ENCODE measurements at regions of chrX and their contacts with region 1.

Region 1: DNA sequence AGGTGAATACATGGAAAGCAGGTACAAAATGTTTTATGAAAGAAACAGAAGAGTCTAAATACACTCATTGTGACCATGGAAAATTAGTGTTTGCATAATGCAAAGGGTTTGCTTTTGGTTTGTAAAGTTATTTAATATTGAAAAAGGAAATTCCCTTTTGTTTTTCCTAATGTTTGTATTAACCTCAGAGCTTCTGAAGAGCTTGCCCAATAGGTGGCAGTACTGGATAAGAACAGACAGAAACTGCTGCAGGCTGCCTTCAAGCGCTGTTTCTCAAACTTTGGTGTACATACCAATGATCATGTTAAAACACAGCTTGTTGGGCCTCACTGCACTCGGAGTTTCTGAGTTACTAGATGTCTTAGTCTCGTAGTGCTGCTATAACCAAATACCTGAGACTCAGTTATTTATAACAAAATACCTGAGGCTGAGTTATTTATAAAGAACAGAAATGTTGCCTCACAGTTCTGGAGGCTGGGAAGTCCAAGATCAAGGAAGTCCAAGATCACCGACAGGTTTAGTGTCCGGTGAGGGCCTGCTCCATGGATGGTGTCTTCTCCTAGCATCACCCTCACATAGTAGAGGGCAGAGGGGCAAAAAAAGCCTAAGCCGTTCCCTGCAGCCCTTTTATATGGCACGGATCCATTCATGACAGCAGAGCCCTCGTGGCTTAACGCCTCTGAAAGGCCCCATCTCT is 54.2 kb downstream of the SUPT20HL2 start:
- DNase-seq: no peak
- H3K4me3 ChIP-seq: no peak overlapping the region
- H3K27ac ChIP-seq: no peak overlapping the region
- H3K4me1 ChIP-seq: no peaks in the 10 kb centered on the region
- H3K27me3 ChIP-seq: no peaks in the 10 kb centered on the region
- CTCF ChIP-seq: peak in 2 of 3 experiments; percentile 55 to 58; a peak in 3 of 4 replicates
- EP300 ChIP-seq: no peak
- POLR2A ChIP-seq: no peak
- RAD21 ChIP-seq: peak; percentile 77 to 80

Region 2: GRCh38 chrX:24241822-24242648 is 17.7 kb before region 1 on chrX:
- CTCF ChIA-PET with region 1: interaction called, 10 read pairs
- POLR2A ChIA-PET with region 1: no interaction called
- DNase-seq: no peak
- H3K4me3 ChIP-seq: no peak overlapping the region
- H3K27ac ChIP-seq: no peak overlapping the region
- H3K4me1 ChIP-seq: 0 out of 7 replicates have a peak, but pooled peaks cover 0 to 3% (median 0%) of the 10 kb centered on the region in 4 experiments
- H3K27me3 ChIP-seq: no peaks in the 10 kb centered on the region
- CTCF ChIP-seq: peak in 2 of 3 experiments; percentile 21 to 25; a peak in 2 of 4 replicates
- EP300 ChIP-seq: no peak
- POLR2A ChIP-seq: no peak
- RAD21 ChIP-seq: peak; percentile 41 to 55

Measured in H1 (cell line).